ENCODE measurements at regions of chr10 and their contacts with region 1.

Region 1: DNA sequence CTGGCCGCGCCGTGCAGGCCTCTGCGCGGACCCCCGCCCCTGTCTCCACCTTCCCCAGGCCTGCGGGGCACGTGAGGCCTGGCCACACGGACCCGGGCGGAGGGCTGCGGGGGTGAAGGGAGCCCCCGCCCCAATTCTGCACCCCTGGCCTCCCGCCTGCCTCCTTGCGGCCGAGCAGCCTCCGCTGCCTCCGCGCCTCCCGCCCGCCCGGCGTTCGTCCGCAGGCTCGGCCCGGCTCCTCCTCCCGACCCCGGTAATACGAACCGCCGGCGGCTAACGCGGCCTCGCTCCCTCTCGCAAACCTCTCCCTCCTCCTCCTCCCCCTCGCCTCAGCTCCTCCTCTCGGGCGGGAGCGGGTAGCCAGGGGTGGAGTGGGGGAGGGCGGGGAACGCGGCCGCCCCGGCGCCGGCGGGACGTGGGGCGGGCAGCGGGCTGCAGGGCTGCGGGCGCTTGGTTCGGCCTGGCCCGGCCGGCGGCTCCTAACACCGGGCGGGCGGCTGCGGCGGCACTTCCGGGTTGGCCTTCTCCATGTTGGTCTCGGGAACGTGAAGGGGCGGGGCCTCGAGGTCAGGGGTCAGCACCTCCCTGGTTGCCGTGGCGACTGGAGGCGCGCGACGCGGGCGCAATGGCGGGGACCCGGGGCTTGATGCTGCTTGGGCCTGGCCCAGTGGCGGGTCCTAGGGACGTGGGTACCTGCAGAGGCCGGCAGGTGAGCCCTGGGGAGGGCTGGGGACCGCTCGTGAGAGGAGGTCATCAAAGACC is at the start of gene RAB11FIP2:
- DNase-seq: peak; percentile 96 to 98
- H3K4me3 ChIP-seq: peak within 1 kb of the TSS; percentile 89
- H3K4me3 Mint-ChIP-seq: peak within 1 kb of the TSS; percentile 77
- H3K27ac Mint-ChIP-seq: peak within 1 kb of the TSS; percentile 81
- H3K4me1 ChIP-seq: 0 out of 2 replicates have a peak, but pooled peaks cover 6% of the 10 kb centered on the region
- H3K4me1 Mint-ChIP-seq: peaks cover 7% of the 10 kb centered on the region
- H3K27me3 ChIP-seq: no peaks in the 10 kb centered on the region
- H3K27me3 Mint-ChIP-seq: no peaks in the 10 kb centered on the region
- CTCF ChIP-seq: peak in 1 of 2 experiments; percentile 12
- total RNA-seq, gene RAB11FIP2: 25.7 and 26.6 TPM in 2 replicates

Region 2: GRCh38 chr10:117860135-117860534 is 186.4 kb before region 1 on chr10:
- CTCF ChIA-PET with region 1: no interaction called
- POLR2A ChIA-PET with region 1: no interaction called
- intact Hi-C with region 1: no loop called
- DNase-seq: no peak
- H3K4me3 ChIP-seq: no peak overlapping the region
- H3K4me3 Mint-ChIP-seq: no peak overlapping the region
- H3K27ac Mint-ChIP-seq: no peak overlapping the region
- H3K4me1 ChIP-seq: no peaks in the 10 kb centered on the region
- H3K4me1 Mint-ChIP-seq: no peaks in the 10 kb centered on the region
- H3K27me3 ChIP-seq: no peaks in the 10 kb centered on the region
- H3K27me3 Mint-ChIP-seq: peaks cover 15% of the 10 kb centered on the region
- CTCF ChIP-seq: no peak

Region 3: DNA sequence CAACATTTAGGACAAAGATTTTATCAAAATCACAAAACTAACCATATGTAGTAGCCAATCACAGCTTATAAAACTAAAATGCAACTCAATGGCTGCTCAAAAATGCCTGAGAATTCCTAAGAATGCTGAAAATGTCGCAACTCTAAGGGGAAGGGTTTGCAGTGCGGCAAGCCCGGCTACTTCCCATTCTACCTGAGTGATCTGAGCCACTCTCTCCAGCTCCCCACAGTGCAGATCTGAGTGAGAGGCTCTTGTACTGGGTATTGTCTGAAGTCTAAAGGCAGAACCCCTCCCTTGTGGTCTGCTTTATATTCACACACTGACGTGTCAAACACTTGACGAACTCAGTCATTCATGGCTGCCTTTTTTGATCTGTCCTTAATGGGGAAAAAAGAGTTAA is 28.7 kb before region 1 on chr10:
- CTCF ChIA-PET with region 1: no interaction called
- POLR2A ChIA-PET with region 1: no interaction called
- intact Hi-C with region 1: loop called (anchors 1 kb)
- DNase-seq: peak in 1 of 2 experiments; percentile 11
- H3K4me3 ChIP-seq: no peak overlapping the region
- H3K4me3 Mint-ChIP-seq: no peak overlapping the region
- H3K27ac Mint-ChIP-seq: no peak overlapping the region
- H3K4me1 ChIP-seq: peaks cover 7% of the 10 kb centered on the region; the same call in 1 of the 2 replicates
- H3K4me1 Mint-ChIP-seq: peaks cover 16% of the 10 kb centered on the region
- H3K27me3 ChIP-seq: no peaks in the 10 kb centered on the region
- H3K27me3 Mint-ChIP-seq: no peaks in the 10 kb centered on the region
- CTCF ChIP-seq: no peak

Region 4: GRCh38 chr10:118062798-118063238 is 16.2 kb after region 1 on chr10:
- CTCF ChIA-PET with region 1: interaction called, 5 read pairs
- POLR2A ChIA-PET with region 1: interaction called, 6 read pairs
- intact Hi-C with region 1: loop called (anchors 1 kb)
- DNase-seq: peak; percentile 79 to 85
- H3K4me3 ChIP-seq: no peak overlapping the region
- H3K4me3 Mint-ChIP-seq: peak overlapping the region; percentile 52
- H3K27ac Mint-ChIP-seq: peak overlapping the region; percentile 88
- H3K4me1 ChIP-seq: peaks cover 43% of the 10 kb centered on the region
- H3K4me1 Mint-ChIP-seq: peaks cover 24% of the 10 kb centered on the region
- H3K27me3 ChIP-seq: no peaks in the 10 kb centered on the region
- H3K27me3 Mint-ChIP-seq: no peaks in the 10 kb centered on the region
- CTCF ChIP-seq: no peak

Region 5: DNA sequence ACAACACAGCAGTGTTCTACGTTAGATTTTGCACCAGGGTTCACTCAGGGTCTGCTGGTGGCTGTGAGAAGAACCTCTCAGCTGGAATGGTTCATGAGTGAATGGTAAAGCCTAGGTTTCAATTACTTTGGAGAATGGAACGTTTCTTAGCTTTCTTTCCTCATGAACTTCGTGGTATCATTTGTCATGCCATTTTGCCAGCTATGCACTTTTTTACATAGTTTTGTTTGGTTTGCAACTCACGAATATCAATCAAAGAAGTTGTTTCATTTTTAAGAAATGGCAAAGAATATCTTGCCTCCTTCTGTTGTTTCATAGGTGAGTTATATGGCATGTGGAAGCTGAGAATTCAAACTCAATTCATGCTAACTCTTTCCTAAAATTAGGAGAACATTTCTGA is 34.2 kb after region 1 on chr10:
- CTCF ChIA-PET with region 1: no interaction called
- POLR2A ChIA-PET with region 1: no interaction called
- intact Hi-C with region 1: loop called (anchors 1 kb)
- DNase-seq: no peak
- H3K4me3 ChIP-seq: no peak overlapping the region
- H3K4me3 Mint-ChIP-seq: no peak overlapping the region
- H3K27ac Mint-ChIP-seq: no peak overlapping the region
- H3K4me1 ChIP-seq: peaks cover 11% of the 10 kb centered on the region; the same call in 1 of the 2 replicates
- H3K4me1 Mint-ChIP-seq: peaks cover 6% of the 10 kb centered on the region
- H3K27me3 ChIP-seq: no peaks in the 10 kb centered on the region
- H3K27me3 Mint-ChIP-seq: no peaks in the 10 kb centered on the region
- CTCF ChIP-seq: no peak

Region 6: GRCh38 chr10:118151461-118151860 is 104.9 kb after region 1 on chr10:
- CTCF ChIA-PET with region 1: no interaction called
- POLR2A ChIA-PET with region 1: no interaction called
- intact Hi-C with region 1: loop called (anchors 5 kb)
- DNase-seq: peak; percentile 84 to 92
- H3K4me3 ChIP-seq: no peak overlapping the region
- H3K4me3 Mint-ChIP-seq: peak overlapping the region; percentile 63
- H3K27ac Mint-ChIP-seq: peak overlapping the region; percentile 97
- H3K4me1 ChIP-seq: peaks cover 40% of the 10 kb centered on the region
- H3K4me1 Mint-ChIP-seq: peaks cover 21% of the 10 kb centered on the region
- H3K27me3 ChIP-seq: no peaks in the 10 kb centered on the region
- H3K27me3 Mint-ChIP-seq: no peaks in the 10 kb centered on the region
- CTCF ChIP-seq: no peak